ENCODE measurements at regions of chr18 and their contacts with region 1.

Region 1: DNA sequence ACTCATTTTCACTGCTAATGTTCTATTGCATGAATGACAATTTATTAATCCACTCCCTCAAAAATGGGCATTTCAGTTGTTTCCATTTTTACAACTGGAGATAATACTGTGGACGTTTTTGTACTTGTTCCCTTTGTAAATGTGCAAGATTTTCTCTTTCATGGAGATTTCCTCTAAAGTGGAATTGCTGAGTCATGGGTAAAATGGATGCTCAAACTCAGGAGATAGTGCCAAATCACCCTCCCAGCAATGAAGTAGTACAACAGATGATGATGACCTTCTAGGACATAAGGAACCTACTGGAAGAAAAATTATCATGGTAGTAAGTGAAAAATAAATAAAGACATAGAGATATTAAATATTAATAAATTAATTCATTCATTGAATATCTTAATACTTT is 460.8 kb upstream of the CHST9 start:
- DNase-seq: no peak
- ATAC-seq: no peak
- H3K4me3 ChIP-seq: no peak overlapping the region
- H3K27ac ChIP-seq: no peak overlapping the region
- H3K4me1 ChIP-seq: no peaks in the 10 kb centered on the region
- H3K27me3 ChIP-seq: peaks cover 0 to 15% (median 0%) of the 10 kb centered on the region in 4 donors
- CTCF ChIP-seq: no peak

Region 2: GRCh38 chr18:27704736-27705361 is 58.9 kb after region 1 on chr18:
- intact Hi-C with region 1: loop called in 1 of 3 experiments (anchors 10 kb)
- DNase-seq: no peak
- ATAC-seq: no peak
- H3K4me3 ChIP-seq: no peak overlapping the region
- H3K27ac ChIP-seq: no peak overlapping the region
- H3K4me1 ChIP-seq: no peaks in the 10 kb centered on the region
- H3K27me3 ChIP-seq: no peaks in the 10 kb centered on the region
- CTCF ChIP-seq: no peak